ENCODE measurements at regions of chr10 and their contacts with region 1.

Region 1: DNA sequence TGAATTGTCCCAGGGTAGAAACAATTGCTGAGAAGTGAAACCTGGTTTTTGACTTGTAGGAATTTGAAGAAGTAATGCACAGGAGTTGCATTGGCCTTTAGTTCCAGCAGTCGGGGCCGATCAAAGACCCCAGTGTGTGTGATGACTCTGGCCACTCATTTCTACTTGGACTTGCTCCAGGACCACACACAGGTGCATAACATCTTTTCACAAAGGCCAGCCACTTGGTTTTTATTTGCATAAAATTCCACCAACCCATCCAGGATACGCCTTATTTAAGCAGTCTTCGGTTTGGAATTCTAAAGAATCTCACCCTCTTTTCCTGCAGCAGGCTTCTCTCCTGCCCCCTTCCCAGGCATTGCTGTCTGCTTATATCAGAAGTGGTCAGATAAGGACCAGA is 162.0 kb upstream of the HABP2 start:
- DNase-seq: no peak
- H3K4me3 ChIP-seq: no peak overlapping the region
- H3K27ac ChIP-seq: no peak overlapping the region
- H3K4me1 ChIP-seq: peaks cover 7 to 12% of the 10 kb centered on the region in 2 donors
- H3K27me3 ChIP-seq: no peaks in the 10 kb centered on the region
- CTCF ChIP-seq: no peak

Region 2: DNA sequence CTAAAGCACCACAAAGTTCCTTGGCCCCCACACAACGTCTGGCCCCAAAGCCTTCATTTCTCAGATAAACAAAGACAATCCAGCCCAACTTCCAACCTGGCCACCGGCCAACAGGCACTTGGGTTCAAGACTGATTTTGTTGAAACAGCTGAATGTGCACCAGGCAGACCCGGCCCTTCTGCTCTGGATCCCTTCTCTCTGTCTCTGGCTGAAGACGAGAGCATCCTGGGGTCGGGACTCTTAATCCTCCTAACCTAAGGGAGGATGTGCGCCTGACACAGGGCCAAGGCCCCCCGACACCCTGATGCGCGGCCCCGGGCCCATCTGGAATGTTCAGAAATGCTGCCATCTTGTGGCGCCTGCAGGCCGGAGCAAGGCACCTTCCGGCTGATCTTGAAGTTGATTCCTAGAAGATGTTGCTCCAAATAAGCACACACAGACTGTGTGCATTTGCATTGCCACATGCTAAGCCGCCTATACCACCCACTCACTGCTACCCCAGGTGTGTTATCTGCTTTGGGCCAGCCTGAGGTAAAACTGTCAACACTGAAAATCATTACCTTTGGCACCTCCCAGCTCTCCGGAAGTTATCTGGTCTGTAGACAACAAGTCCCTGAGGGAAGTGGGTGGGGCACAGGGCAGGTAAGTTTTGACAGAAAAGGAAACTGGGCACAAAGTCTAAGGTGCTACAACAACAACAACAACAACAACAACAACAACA is 63.6 kb after region 1 on chr10:
- intact Hi-C with region 1: loop called (anchors 5 kb)
- DNase-seq: peak in 1 of 2 donors; percentile 70
- H3K4me3 ChIP-seq: peak overlapping the region; percentile 35 to 58
- H3K27ac ChIP-seq: no peak overlapping the region
- H3K4me1 ChIP-seq: no peaks in the 10 kb centered on the region
- H3K27me3 ChIP-seq: no peaks in the 10 kb centered on the region
- CTCF ChIP-seq: peak; percentile 47 to 78 (median 48)

Region 3: GRCh38 chr10:113764582-113764981 is 373.7 kb after region 1 on chr10:
- intact Hi-C with region 1: no loop called
- DNase-seq: no peak
- H3K4me3 ChIP-seq: no peak overlapping the region
- H3K27ac ChIP-seq: no peak overlapping the region
- H3K4me1 ChIP-seq: no peaks in the 10 kb centered on the region
- H3K27me3 ChIP-seq: no peaks in the 10 kb centered on the region
- CTCF ChIP-seq: no peak

Measured in ascending aorta (tissue), 2 donors.